ENCODE measurements at regions of chr11 and their contacts with region 1.

Region 1: GRCh38 chr11:14953904-14954303 is 18.2 kb downstream of the CALCA start:
- DNase-seq: no peak
- H3K4me3 ChIP-seq: no peak overlapping the region
- H3K27ac ChIP-seq: no peak overlapping the region
- H3K4me1 ChIP-seq: no peaks in the 10 kb centered on the region
- H3K27me3 ChIP-seq: no peaks in the 10 kb centered on the region
- CTCF ChIP-seq: no peak

Region 2: DNA sequence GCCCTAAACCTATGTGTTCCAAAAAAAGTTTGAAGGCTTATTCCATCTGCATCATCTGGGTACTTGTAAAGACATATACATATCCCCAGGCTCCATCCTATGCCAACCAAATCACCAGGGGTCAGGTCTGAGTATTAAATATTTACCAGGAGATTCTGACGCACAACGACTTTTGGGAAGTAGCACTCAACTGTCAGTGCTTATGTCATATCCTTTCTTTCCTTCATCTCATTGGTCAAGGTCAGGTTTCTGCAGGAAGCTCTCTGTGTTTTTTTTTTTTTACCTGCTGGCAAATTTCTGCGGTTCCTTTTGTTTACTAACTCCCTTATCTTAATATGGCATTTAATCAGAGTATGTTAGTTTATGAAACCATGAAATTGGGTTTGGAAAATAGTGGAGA is 39.4 kb before region 1 on chr11:
- CTCF ChIA-PET with region 1: no interaction called
- dilution Hi-C with region 1: loop called (anchors 5 kb)
- in situ Hi-C with region 1: no loop called
- intact Hi-C with region 1: no loop called
- DNase-seq: no peak
- H3K4me3 ChIP-seq: no peak overlapping the region
- H3K27ac ChIP-seq: no peak overlapping the region
- H3K4me1 ChIP-seq: no peaks in the 10 kb centered on the region
- H3K27me3 ChIP-seq: peaks cover 2% of the 10 kb centered on the region
- CTCF ChIP-seq: no peak

Region 3: DNA sequence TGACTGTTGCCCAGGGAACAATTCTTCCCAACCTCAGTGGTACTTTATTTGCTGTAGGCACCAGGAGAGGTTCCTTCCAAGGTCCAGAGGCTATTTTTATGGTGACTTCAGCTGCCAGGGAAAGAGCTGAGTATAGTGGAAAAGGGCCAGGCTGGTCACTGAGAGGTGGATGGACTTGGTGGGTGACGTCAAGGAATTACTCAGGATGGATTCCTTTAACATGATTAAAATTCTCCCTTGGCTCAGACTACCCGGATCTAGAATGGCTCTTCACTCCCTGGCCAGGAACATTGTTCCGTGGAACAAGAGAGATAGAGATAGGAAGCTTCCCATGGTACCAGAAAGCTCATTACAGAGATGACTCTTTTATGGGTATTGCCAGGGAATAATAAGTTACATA is 26.9 kb after region 1 on chr11:
- CTCF ChIA-PET with region 1: no interaction called
- dilution Hi-C with region 1: loop called (anchors 5 kb)
- in situ Hi-C with region 1: no loop called
- intact Hi-C with region 1: no loop called
- DNase-seq: peak; percentile 28
- H3K4me3 ChIP-seq: no peak overlapping the region
- H3K27ac ChIP-seq: no peak overlapping the region
- H3K4me1 ChIP-seq: no peaks in the 10 kb centered on the region
- H3K27me3 ChIP-seq: peaks cover 8% of the 10 kb centered on the region
- CTCF ChIP-seq: no peak

Region 4: DNA sequence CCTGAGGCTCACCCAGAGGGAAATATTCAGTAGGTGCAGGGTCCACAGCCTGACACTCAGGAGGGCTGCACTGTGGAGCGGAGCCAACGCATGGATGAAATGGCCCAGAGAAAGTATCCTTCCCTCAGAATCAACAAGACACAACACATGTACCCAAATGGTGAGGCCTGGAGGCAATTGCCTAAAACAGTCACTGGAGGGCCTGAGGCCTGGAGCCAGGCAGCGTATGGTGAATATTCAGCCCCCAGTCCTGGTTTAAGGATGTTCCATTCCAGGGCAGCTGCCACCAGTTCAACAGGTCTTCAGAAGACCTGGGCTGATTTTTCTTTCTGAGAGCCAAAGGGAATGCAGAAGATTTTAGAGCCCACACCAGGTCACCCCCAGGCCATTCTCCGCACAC is 425.6 kb after region 1 on chr11:
- CTCF ChIA-PET with region 1: no interaction called
- dilution Hi-C with region 1: no loop called
- in situ Hi-C with region 1: no loop called
- intact Hi-C with region 1: no loop called
- DNase-seq: no peak
- H3K4me3 ChIP-seq: no peak overlapping the region
- H3K27ac ChIP-seq: no peak overlapping the region
- H3K4me1 ChIP-seq: no peaks in the 10 kb centered on the region
- H3K27me3 ChIP-seq: no peaks in the 10 kb centered on the region
- CTCF ChIP-seq: no peak